ENCODE measurements at regions of chr3 and their contacts with region 1.

Region 1: DNA sequence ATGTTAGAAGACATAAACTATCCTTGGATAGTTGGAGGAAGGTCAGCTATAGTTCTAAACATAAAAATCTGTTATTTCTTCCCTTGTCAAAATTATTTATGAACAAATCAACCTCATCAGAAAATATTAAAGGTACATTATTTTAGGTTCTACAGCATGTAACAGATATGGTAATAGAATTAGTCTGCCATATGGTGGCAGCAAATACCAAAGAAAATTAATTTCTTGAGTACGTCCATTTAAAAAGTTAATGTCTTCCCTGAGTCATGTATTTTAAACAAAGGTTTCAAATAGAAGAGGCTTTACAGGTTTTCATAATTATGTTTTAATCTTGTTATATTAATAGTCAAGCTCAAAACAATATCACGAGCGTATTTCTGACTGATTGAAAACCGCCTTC is 17.9 kb upstream of the ANKRD28 start:
- DNase-seq: peak; percentile 64
- H3K4me3 ChIP-seq: no peak overlapping the region
- H3K27ac ChIP-seq: no peak overlapping the region
- H3K4me1 ChIP-seq: no peaks in the 10 kb centered on the region
- H3K27me3 ChIP-seq: no peaks in the 10 kb centered on the region
- CTCF ChIP-seq: peak; percentile 56

Region 2: DNA sequence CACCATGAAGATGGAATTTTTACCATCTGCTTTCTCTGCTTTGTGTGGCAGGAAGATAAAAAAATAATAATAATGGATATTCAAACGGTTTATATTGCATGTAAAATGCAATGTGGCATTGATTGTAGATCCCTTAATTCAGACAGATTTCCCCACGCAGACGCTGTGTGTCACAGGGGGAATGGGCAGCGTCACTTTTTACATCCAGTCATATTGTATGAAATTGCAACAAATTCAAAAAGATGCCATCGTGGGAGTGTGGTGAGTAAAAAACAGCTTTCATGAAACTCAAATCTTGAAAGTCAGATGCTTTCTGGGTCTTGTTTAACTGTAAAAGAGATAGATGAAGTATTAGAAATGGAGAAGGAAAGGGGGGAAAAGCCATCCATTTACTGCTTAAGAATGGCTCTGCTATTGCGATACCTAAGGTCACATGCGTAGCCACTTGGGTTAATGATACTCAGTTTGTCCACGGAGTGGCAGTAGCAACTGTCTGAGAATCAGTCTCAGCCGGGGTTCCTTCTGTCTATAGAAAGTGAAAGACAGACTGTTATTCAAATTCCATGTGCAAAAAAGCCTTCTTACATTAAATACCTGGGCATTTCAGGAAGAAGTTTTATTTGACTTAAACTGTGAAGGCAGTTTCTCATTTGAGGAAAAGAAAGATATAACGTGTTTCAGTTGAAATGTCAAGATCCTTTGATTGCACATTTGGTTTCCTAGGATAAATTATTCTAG is 185.7 kb before region 1 on chr3:
- CTCF ChIA-PET with region 1: no interaction called
- POLR2A ChIA-PET with region 1: no interaction called
- intact Hi-C with region 1: loop called (anchors 1 kb)
- DNase-seq: peak; percentile 87
- H3K4me3 ChIP-seq: peak overlapping the region; percentile 20
- H3K27ac ChIP-seq: no peak overlapping the region
- H3K4me1 ChIP-seq: peaks cover 22% of the 10 kb centered on the region
- H3K27me3 ChIP-seq: no peaks in the 10 kb centered on the region
- CTCF ChIP-seq: peak; percentile 84

Region 3: DNA sequence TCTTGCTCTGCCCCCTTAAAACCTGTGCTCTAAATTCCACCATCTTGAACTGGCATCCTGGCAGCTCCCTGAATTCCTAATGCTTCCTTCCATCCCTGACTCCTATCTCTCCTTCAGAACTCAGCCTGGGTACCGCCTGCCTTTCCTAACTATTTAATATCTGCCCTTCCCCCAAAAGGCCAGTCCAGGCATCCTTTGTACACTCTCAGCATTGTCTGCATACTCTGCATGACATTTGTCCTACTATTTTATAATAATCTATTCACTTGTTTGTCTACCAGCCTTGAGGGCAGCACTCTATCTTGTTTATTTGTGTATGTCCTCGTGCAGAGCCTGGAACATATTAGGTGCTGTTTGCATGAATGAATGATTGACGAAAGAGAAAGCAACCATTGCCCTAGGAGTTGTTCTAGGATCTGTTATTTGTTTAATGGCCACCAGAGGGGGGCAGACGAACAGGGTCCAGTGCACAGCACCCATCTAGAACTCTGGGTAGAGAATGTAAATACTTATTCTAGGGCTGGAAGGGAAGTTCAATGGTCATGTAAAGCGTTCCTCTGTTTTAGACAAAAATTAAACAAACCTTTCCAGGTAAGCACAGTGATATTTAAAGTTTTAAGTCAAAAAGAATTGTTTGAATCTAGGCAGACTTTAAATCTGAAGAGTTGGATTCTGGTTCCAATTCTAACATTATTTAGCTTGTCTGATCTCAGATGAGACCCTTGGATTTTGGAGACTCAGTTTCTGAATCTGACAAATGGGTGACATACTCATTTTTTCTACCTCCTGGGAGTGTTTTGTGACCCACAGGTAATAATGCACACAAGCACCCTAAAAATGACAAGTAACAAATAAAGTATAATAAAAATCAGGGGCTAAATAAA is 233.0 kb after region 1 on chr3:
- CTCF ChIA-PET with region 1: no interaction called
- POLR2A ChIA-PET with region 1: no interaction called
- intact Hi-C with region 1: loop called (anchors 5 kb)
- DNase-seq: peak; percentile 75
- H3K4me3 ChIP-seq: peak overlapping the region; percentile 22
- H3K27ac ChIP-seq: no peak overlapping the region
- H3K4me1 ChIP-seq: no peaks in the 10 kb centered on the region
- H3K27me3 ChIP-seq: no peaks in the 10 kb centered on the region
- CTCF ChIP-seq: peak; percentile 80